ENCODE measurements at regions of chr9 and their contacts with region 1.

Region 1: GRCh38 chr9:123929870-123930831 is at the start of gene DENND1A:
- DNase-seq: peak; percentile 58 to 92
- H3K4me3 ChIP-seq: peak within 1 kb of the TSS; percentile 85
- H3K27ac ChIP-seq: peak within 1 kb of the TSS; percentile 75
- H3K4me1 ChIP-seq: peaks cover 64% of the 10 kb centered on the region
- H3K27me3 ChIP-seq: no peaks in the 10 kb centered on the region
- CTCF ChIP-seq: no peak
- total RNA-seq, gene DENND1A: 26.8 and 37.7 TPM in 2 replicates

Region 2: DNA sequence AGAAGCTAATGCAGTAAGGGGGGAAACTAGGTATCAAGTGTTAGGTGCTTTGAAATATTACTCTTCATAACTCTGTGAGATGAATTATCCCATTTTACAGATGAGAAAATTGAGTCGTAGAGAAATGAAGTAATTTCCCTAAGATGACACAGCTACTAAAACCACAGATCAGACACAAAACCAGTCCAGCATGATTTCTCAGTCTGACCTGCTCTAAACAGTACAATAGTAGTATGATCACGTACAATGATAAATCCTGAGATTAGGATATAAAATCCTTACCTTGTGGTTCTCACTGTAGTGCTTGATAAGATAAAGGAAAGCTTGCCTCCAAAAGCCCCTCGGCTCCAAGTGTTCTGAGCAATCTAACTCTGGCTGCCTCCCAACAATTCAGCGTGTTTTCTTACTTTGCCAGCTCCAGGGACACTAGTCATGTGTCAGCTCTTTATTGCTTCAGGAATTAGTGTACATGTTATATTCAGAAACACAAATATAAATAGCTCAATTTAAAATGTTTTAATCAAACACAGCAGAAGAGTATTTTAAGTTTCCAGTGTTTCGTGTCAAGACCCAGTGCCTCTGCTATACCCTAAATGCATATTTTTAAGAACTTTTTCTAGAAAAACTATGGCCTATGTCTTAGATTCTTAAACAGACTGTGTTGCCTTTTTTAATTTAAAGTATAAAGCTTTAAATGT is 243.9 kb before region 1 on chr9:
- CTCF ChIA-PET with region 1: no interaction called
- POLR2A ChIA-PET with region 1: no interaction called
- intact Hi-C with region 1: loop called (anchors 5 kb)
- DNase-seq: peak; percentile 36 to 49
- H3K4me3 ChIP-seq: no peak overlapping the region
- H3K27ac ChIP-seq: no peak overlapping the region
- H3K4me1 ChIP-seq: peaks cover 12% of the 10 kb centered on the region
- H3K27me3 ChIP-seq: no peaks in the 10 kb centered on the region
- CTCF ChIP-seq: no peak

Region 3: DNA sequence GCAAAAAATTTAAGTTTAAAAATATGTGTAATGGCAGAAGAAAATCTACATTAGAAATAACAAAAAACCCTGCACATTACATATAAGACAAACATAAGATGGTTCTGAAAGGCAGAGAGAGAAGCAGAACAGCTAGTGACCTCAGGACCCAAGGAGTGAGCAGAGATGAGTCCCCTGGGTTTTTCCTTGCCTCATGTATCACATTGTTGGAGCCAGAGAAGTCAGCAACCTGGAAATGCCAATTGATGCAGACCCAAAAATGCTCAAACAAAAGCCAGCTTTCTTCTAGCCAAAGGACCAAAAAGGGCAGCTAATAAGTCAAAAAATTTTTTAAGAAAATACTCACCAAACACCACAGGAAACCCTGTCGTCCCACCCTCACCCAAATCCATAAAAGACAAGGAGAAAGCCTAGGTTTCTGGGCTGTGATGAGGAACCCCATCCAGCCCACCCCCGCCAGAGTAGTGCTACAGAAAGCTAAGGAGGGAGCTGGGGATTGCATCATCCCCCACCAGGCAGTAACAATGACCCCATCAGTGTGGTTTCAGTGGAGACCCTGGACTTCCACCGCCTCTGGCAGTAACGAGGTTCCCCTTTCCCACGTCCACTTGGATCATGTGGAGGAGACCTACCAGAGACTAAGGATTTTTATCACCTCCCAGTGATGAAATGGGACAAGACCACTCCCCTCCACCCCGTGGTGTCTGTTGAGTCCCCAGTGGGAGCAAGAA is 17.8 kb before region 1 on chr9:
- CTCF ChIA-PET with region 1: no interaction called
- POLR2A ChIA-PET with region 1: no interaction called
- intact Hi-C with region 1: no loop called
- DNase-seq: no peak
- H3K4me3 ChIP-seq: no peak overlapping the region
- H3K27ac ChIP-seq: no peak overlapping the region
- H3K4me1 ChIP-seq: no peaks in the 10 kb centered on the region
- H3K27me3 ChIP-seq: no peaks in the 10 kb centered on the region
- CTCF ChIP-seq: no peak

Measured in PC-9 (cell line).